OCI-LY7 (cell line): ENCODE measurements at regions of chr12 and their contacts with region 1.

Region 1: GRCh38 chr12:15856097-15856982 is 25.8 kb upstream of the STRAP start:
- DNase-seq: peak; percentile 60
- H3K4me3 ChIP-seq: no peak overlapping the region
- H3K27ac ChIP-seq: no peak overlapping the region
- H3K4me1 ChIP-seq: no peaks in the 10 kb centered on the region
- CTCF ChIP-seq: peak; percentile 86

Region 2: GRCh38 chr12:15590180-15590826 is 266.0 kb before region 1 on chr12:
- CTCF ChIA-PET with region 1: interaction called, 3 read pairs
- POLR2A ChIA-PET with region 1: no interaction called
- intact Hi-C with region 1: loop called (anchors 1 kb)
- DNase-seq: peak; percentile 73
- H3K4me3 ChIP-seq: no peak overlapping the region
- H3K27ac ChIP-seq: no peak overlapping the region
- H3K4me1 ChIP-seq: no peaks in the 10 kb centered on the region
- CTCF ChIP-seq: peak; percentile 92

Region 3: DNA sequence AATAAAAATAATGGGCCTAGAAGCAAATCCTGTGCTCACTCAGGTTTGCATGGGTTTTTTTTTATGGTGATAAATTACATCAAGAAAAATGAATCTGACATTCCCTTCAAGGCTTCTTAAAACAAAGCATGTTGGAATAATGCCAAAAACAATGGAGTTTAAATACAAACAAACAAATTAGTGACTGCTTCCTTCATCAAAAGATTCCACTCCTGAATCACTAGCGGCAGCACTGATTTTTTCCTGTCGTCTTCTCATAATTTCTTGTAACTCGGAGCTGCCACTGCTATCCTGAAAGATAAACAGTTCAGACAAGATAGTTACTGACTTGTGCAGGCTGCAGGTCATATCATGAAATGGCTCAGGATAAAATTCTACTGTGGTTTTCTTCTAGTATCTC is 235.2 kb before region 1 on chr12:
- CTCF ChIA-PET with region 1: no interaction called
- POLR2A ChIA-PET with region 1: no interaction called
- intact Hi-C with region 1: no loop called
- DNase-seq: no peak
- H3K4me3 ChIP-seq: no peak overlapping the region
- H3K27ac ChIP-seq: no peak overlapping the region
- H3K4me1 ChIP-seq: no peaks in the 10 kb centered on the region
- CTCF ChIP-seq: no peak